AG04450 (cell line): ENCODE measurements at regions of chr6 and their contacts with region 1.

Region 1: GRCh38 chr6:80438772-80439171 is 332.3 kb downstream of the BCKDHB start:
- DNase-seq: peak; percentile 59
- H3K4me3 ChIP-seq: no peak overlapping the region
- H3K27ac ChIP-seq: no peak overlapping the region
- H3K27me3 ChIP-seq: no peaks in the 10 kb centered on the region
- CTCF ChIP-seq: no peak

Region 2: GRCh38 chr6:80425089-80425823 is 13.5 kb before region 1 on chr6:
- CTCF ChIA-PET with region 1: interaction called, 4 read pairs
- POLR2A ChIA-PET with region 1: interaction called, 11 read pairs
- DNase-seq: peak; percentile 95
- H3K4me3 ChIP-seq: no peak overlapping the region
- H3K27ac ChIP-seq: peak overlapping the region; percentile 34
- H3K27me3 ChIP-seq: no peaks in the 10 kb centered on the region
- CTCF ChIP-seq: peak; percentile 22; the same call in 1 of the 2 replicates

Region 3: GRCh38 chr6:80523531-80523997 is 84.8 kb after region 1 on chr6:
- CTCF ChIA-PET with region 1: no interaction called
- POLR2A ChIA-PET with region 1: no interaction called
- DNase-seq: no peak
- H3K4me3 ChIP-seq: no peak overlapping the region
- H3K27ac ChIP-seq: no peak overlapping the region
- H3K27me3 ChIP-seq: no peaks in the 10 kb centered on the region
- CTCF ChIP-seq: no peak